ENCODE measurements at regions of chr6 and their contacts with region 1.

Region 1: DNA sequence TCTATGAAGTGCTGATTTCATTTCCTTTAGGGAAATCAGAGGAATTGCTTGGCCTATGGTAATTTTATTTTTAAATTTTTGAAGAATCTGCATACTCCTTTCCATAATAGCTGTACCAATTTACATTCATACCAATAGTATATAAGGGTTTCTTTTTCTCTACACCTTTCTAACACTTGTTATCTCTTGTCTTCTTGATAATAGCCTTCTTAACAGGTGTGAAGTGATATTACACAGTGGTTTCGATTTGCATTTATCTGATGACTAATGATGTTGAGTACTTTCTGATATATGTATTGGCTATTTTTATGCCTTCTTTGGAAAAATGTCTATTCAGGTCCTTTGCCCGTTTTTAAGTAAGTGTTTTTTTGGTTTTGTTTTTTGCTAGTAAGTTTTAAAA is 40.8 kb downstream of the SMAP1 start:
- DNase-seq: no peak

Region 2: DNA sequence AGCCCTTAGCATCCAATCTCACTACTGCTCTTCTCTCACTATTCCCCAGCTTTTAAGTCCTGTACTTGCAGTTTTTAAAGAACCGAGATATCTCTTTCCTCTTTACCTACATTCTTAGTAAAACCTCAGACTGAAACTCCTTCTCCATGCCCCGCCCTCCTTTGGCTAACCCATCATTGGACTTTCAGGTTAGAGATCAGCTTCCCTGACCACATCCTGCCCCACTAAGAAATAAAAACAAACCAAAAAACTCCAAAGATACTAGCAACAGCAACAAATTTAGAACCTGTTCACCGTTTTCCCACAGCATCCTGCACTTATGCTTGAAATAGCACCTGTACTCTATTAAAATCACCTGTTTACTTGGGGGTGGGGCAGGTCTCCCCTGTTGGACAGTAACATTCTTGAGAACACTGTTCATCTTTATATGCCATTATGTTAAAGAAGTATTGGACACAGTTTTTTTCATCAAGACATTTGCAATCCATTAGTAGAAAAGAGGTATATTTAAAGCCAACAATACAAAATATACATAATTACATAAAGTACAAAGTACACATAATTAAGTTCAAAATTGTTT is 57.0 kb before region 1 on chr6:
- intact Hi-C with region 1: no loop called
- DNase-seq: no peak

Region 3: GRCh38 chr6:70884074-70884983 is 175.9 kb after region 1 on chr6:
- intact Hi-C with region 1: loop called (anchors 1 kb)
- DNase-seq: no peak

Measured in cardiac septum (tissue), 1 donor.